SK-N-SH (cell line): ENCODE measurements at regions of chr10 and their contacts with region 1.

Region 1: GRCh38 chr10:119445311-119445934 is 97.1 kb downstream of the RGS10 start:
- DNase-seq: peak; percentile 94
- H3K4me3 ChIP-seq: peak overlapping the region in 1 of 2 experiments; percentile 23; a peak in 1 of 4 replicates
- H3K27ac ChIP-seq: no peak overlapping the region
- H3K4me1 ChIP-seq: peaks cover 3 to 8% of the 10 kb centered on the region in 2 experiments; a peak in 2 of 4 replicates
- H3K27me3 ChIP-seq: no peaks in the 10 kb centered on the region
- CTCF ChIP-seq: peak; percentile 90
- EP300 ChIP-seq: no peak
- RAD21 ChIP-seq: peak; percentile 86

Region 2: GRCh38 chr10:119207367-119207668 is 238.1 kb before region 1 on chr10 and contains the start of gene GRK5:
- CTCF ChIA-PET with region 1: interaction called, 505 read pairs
- POLR2A ChIA-PET with region 1: no interaction called
- DNase-seq: peak; percentile 98
- H3K4me3 ChIP-seq: peak within 1 kb of the TSS; percentile 91
- H3K27ac ChIP-seq: peak within 1 kb of the TSS; percentile 67 to 98
- H3K4me1 ChIP-seq: peaks cover 30 to 32% of the 10 kb centered on the region in 2 experiments
- H3K27me3 ChIP-seq: no peaks in the 10 kb centered on the region
- CTCF ChIP-seq: no peak
- EP300 ChIP-seq: no peak
- RAD21 ChIP-seq: no peak
- polyA plus RNA-seq, gene GRK5: 9.5 and 12.1 TPM in 2 replicates

Region 3: DNA sequence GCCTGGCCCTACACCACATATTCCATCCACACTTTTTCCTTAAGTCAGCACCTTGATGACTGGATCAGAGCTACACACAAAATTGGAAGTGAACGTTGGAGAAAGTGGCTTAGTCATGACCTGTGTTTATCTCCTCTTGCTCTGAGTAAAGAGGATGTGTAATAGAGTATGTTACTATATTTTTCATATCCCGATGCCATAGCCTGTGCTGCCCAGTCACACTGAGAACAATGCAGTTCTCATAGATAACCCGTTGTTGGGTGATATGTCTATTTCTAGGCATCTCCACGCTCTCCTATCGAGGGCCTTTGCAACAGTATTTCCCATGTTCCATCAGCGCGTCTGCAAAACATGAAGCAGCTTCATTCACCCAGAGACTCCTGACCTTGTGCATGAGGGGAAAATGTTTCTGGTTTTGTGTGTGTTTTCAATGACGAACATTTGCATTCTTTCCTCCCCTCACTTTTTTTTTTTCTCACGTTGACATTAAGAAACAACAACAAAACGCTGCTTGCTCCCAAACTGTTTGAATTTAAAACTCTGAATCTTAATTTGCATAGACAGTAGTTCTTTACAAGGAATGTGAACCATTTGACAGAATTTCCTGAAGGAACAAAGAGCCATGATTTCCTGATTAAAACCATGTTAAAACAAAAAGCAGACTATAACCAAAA is 194.6 kb before region 1 on chr10:
- CTCF ChIA-PET with region 1: interaction called, 10 read pairs
- POLR2A ChIA-PET with region 1: no interaction called
- DNase-seq: no peak
- H3K4me3 ChIP-seq: peak overlapping the region in 1 of 2 experiments; percentile 18; a peak in 1 of 4 replicates
- H3K27ac ChIP-seq: peak overlapping the region; percentile 80 to 98
- H3K4me1 ChIP-seq: peaks cover 57 to 62% of the 10 kb centered on the region in 2 experiments
- H3K27me3 ChIP-seq: no peaks in the 10 kb centered on the region
- CTCF ChIP-seq: no peak
- EP300 ChIP-seq: peak; percentile 4 to 62; a peak in 1 of 4 replicates
- RAD21 ChIP-seq: no peak

Region 4: DNA sequence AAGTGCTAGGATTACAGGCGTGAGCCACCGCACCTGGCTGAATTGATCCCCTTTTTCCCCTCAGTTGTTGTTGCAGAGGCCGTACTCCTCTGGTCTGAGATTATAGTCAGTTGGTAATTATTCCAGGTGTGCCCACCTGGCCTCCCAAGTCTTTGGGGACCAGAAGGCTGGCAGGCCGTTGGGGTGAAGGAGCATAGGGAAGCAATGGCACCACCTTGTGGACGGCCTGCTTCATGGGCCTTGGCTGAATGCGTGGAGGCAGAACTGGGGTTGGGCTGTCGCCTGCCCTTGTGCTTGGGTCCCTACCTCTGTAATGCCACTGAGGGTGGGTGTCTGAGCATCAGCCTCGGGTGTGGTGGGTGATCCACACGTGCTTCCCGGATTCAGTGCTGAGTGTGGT is 28.6 kb before region 1 on chr10:
- CTCF ChIA-PET with region 1: interaction called, 150 read pairs
- POLR2A ChIA-PET with region 1: no interaction called
- DNase-seq: peak; percentile 80
- H3K4me3 ChIP-seq: no peak overlapping the region
- H3K27ac ChIP-seq: no peak overlapping the region
- H3K4me1 ChIP-seq: peaks cover 7 to 66% of the 10 kb centered on the region in 2 experiments; a peak in 2 of 4 replicates
- H3K27me3 ChIP-seq: no peaks in the 10 kb centered on the region
- CTCF ChIP-seq: peak; percentile 81
- EP300 ChIP-seq: no peak
- RAD21 ChIP-seq: peak; percentile 87

Region 5: GRCh38 chr10:119461380-119461779 is 16.0 kb after region 1 on chr10:
- CTCF ChIA-PET with region 1: interaction called, 38 read pairs
- POLR2A ChIA-PET with region 1: no interaction called
- DNase-seq: no peak
- H3K4me3 ChIP-seq: no peak overlapping the region
- H3K27ac ChIP-seq: no peak overlapping the region
- H3K4me1 ChIP-seq: no peaks in the 10 kb centered on the region
- H3K27me3 ChIP-seq: no peaks in the 10 kb centered on the region; the same call in 1 of the 2 replicates
- CTCF ChIP-seq: no peak
- EP300 ChIP-seq: no peak
- RAD21 ChIP-seq: no peak

Region 6: DNA sequence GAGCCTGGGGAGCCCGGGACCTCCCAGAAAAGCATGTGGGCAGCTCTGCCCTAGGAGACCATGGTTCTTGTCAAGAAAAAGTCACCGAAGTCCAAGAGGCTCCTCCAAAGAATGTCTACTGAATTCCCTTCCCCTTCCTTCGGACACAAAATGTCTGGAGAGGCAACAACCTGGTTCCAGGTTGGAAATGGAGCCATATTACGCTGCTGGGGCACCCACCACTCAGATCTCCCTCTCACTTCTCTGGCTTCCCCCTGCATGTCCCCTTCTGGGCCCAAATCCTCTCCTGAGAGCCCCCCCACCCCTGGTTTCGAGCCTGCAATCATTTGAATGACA is 44.5 kb after region 1 on chr10:
- CTCF ChIA-PET with region 1: interaction called, 21 read pairs
- POLR2A ChIA-PET with region 1: no interaction called
- DNase-seq: no peak
- H3K4me3 ChIP-seq: no peak overlapping the region
- H3K27ac ChIP-seq: no peak overlapping the region
- H3K4me1 ChIP-seq: no peaks in the 10 kb centered on the region; a peak in 1 of 4 replicates
- H3K27me3 ChIP-seq: no peaks in the 10 kb centered on the region
- CTCF ChIP-seq: no peak; the same call in 1 of the 2 replicates
- EP300 ChIP-seq: no peak
- RAD21 ChIP-seq: no peak